Gastrocnemius medialis (tissue), 4 donors: ENCODE measurements at regions of chr19 and their contacts with region 1.

Region 1: DNA sequence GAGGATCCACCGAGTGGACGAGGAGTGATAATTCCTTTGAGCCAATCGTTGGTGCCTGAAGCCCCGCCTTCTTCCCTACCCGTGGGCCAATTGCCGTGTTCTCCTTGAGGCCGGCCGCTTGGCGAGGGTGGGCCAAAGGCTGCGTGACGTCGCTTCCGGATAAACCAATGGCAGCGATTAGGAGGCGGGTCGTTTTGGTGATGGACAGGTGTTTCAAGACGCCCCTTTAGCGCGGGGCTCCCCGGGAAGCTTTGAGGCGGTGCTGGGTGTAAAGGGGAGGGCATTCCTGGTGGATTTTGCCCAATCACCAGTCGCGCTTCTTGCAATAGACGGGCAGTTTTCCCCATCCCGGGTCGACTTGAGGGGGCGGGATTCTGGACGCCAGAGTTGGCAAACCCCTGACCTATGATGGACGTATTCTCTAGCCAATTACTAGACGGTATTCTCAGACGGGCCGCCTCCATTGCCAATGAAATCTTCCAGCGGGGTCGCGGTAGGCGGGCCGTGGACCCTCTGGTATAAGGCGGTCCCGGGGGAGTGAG is 310 bp upstream of the PRMT1 start:
- DNase-seq: peak; percentile 100
- ATAC-seq: peak; percentile 75 to 83
- H3K4me3 ChIP-seq: peak overlapping the region; percentile 78 to 99 (median 95)
- H3K27ac ChIP-seq: peak overlapping the region; percentile 98 to 100 (median 99)
- H3K4me1 ChIP-seq: peaks cover 42 to 53% of the 10 kb centered on the region in 2 donors
- H3K27me3 ChIP-seq: no peaks in the 10 kb centered on the region
- CTCF ChIP-seq: no peak
- POLR2A ChIP-seq: no peak

Region 2: GRCh38 chr19:49473868-49474544 is 202.8 kb before region 1 on chr19 and contains the start of gene FLT3LG:
- in situ Hi-C with region 1: no loop called
- intact Hi-C with region 1: loop called (anchors 2 kb)
- DNase-seq: peak; percentile 41 to 69
- ATAC-seq: peak; percentile 72 to 85
- H3K4me3 ChIP-seq: peak within 1 kb of the TSS; percentile 68 to 84 (median 75)
- H3K27ac ChIP-seq: peak within 1 kb of the TSS; percentile 65 to 87 (median 82)
- H3K4me1 ChIP-seq: peaks cover 0 to 7% of the 10 kb centered on the region in 2 donors
- H3K27me3 ChIP-seq: no peaks in the 10 kb centered on the region
- CTCF ChIP-seq: peak; percentile 90 to 100 (median 98)
- POLR2A ChIP-seq: no peak
- total RNA-seq, gene FLT3LG: 0.91 to 2.7 (median 1.2) TPM

Region 3: GRCh38 chr19:49570138-49570856 is 106.5 kb before region 1 on chr19:
- in situ Hi-C with region 1: loop called in 1 of 4 experiments (anchors 10 kb)
- intact Hi-C with region 1: no loop called
- DNase-seq: peak in 1 of 2 donors; percentile 54
- ATAC-seq: peak; percentile 67 to 73
- H3K4me3 ChIP-seq: no peak overlapping the region
- H3K27ac ChIP-seq: peak overlapping the region; percentile 69 to 85 (median 75)
- H3K4me1 ChIP-seq: peaks cover 39 to 57% of the 10 kb centered on the region in 2 donors
- H3K27me3 ChIP-seq: no peaks in the 10 kb centered on the region
- CTCF ChIP-seq: peak; percentile 92 to 99 (median 98)
- POLR2A ChIP-seq: no peak

Region 4: GRCh38 chr19:49631014-49631588 is 45.7 kb before region 1 on chr19:
- in situ Hi-C with region 1: no loop called
- intact Hi-C with region 1: no loop called
- DNase-seq: no peak
- ATAC-seq: no peak
- H3K4me3 ChIP-seq: no peak overlapping the region
- H3K27ac ChIP-seq: peak overlapping the region in 1 of 4 donors; percentile 13
- H3K4me1 ChIP-seq: peaks cover 3 to 7% of the 10 kb centered on the region in 2 donors
- H3K27me3 ChIP-seq: no peaks in the 10 kb centered on the region
- CTCF ChIP-seq: no peak
- POLR2A ChIP-seq: no peak

Region 5: GRCh38 chr19:49766007-49766937 is 89.5 kb after region 1 on chr19:
- in situ Hi-C with region 1: no loop called
- intact Hi-C with region 1: loop called (anchors 2 kb)
- DNase-seq: peak; percentile 100
- ATAC-seq: peak; percentile 87 to 92
- H3K4me3 ChIP-seq: peak overlapping the region; percentile 48 to 97 (median 74)
- H3K27ac ChIP-seq: peak overlapping the region; percentile 91 to 98 (median 96)
- H3K4me1 ChIP-seq: peaks cover 19 to 22% of the 10 kb centered on the region in 2 donors
- H3K27me3 ChIP-seq: no peaks in the 10 kb centered on the region
- CTCF ChIP-seq: no peak
- POLR2A ChIP-seq: peak; percentile 71 to 75

Region 6: GRCh38 chr19:49877020-49877878 is 200.5 kb after region 1 on chr19 and contains the starts of genes AKT1S1 and TBC1D17:
- in situ Hi-C with region 1: no loop called
- intact Hi-C with region 1: loop called (anchors 2 kb)
- DNase-seq: peak; percentile 100
- ATAC-seq: peak; percentile 85 to 87
- H3K4me3 ChIP-seq: peak within 1 kb of the TSS; percentile 91 to 95 (median 92)
- H3K27ac ChIP-seq: peak within 1 kb of the TSS; percentile 91 to 100 (median 99)
- H3K4me1 ChIP-seq: peaks cover 30 to 35% of the 10 kb centered on the region in 2 donors
- H3K27me3 ChIP-seq: no peaks in the 10 kb centered on the region
- CTCF ChIP-seq: no peak
- POLR2A ChIP-seq: peak; percentile 91 to 94
- total RNA-seq, gene AKT1S1: 23.8 to 56.8 (median 43.4) TPM
- total RNA-seq, gene TBC1D17: 48.7 to 84.3 (median 66.4) TPM